Ascending aorta (tissue), 2 donors: ENCODE measurements at regions of chr19 and their contacts with region 1.

Region 1: DNA sequence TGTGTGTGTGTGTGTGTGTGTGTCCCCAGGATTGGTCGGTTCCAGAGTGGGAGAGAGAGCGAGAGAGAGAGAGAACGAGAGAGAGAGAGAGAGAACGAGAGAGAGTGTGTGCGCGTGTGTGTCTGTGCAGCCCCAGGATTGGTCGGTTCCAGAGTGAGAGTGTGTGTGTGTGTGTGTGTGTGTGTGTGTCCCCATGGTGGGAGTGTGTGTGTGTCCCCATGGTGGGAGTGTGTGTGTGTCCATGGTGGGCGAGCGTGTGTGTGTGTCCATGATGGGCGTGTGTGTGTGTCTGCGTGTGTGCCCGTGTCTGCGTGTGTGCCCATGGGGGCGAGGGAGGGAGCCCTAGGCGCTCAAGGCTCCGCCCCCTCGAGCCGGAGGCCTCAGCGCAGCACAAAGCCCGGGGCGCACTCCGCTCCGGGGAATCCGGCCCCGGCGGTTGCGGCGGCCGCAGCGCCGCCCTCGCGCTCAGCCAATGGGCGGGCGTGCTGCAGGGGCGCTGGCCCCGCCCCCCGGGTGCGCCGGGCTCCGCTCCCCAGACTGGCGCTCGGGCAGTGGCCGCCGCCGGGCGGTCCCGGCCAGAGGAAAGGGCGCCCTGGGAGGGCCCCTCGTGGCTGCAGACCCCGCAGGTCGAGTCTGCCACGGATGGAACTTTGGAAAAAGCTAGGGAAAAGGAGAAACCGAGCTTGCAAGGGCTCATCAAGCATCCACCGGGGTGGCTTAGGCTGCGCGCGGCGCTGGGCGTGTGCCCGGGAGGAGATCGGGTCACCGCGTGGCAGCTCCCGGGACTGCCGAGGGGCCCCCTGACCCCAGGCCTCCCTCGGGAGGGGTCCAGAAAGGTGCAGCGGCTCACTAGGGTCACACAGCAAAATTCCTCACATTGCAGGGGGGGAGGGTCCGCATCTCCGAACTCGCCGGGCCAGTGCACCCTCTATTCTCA is 96.2 kb downstream of the INSR start:
- DNase-seq: peak; percentile 77 to 96
- H3K4me3 ChIP-seq: peak overlapping the region; percentile 81 to 83
- H3K27ac ChIP-seq: peak overlapping the region; percentile 93 to 94
- H3K4me1 ChIP-seq: peaks cover 4 to 9% of the 10 kb centered on the region in 2 donors
- H3K27me3 ChIP-seq: no peaks in the 10 kb centered on the region
- CTCF ChIP-seq: peak; percentile 12 to 40 (median 32)

Region 2: DNA sequence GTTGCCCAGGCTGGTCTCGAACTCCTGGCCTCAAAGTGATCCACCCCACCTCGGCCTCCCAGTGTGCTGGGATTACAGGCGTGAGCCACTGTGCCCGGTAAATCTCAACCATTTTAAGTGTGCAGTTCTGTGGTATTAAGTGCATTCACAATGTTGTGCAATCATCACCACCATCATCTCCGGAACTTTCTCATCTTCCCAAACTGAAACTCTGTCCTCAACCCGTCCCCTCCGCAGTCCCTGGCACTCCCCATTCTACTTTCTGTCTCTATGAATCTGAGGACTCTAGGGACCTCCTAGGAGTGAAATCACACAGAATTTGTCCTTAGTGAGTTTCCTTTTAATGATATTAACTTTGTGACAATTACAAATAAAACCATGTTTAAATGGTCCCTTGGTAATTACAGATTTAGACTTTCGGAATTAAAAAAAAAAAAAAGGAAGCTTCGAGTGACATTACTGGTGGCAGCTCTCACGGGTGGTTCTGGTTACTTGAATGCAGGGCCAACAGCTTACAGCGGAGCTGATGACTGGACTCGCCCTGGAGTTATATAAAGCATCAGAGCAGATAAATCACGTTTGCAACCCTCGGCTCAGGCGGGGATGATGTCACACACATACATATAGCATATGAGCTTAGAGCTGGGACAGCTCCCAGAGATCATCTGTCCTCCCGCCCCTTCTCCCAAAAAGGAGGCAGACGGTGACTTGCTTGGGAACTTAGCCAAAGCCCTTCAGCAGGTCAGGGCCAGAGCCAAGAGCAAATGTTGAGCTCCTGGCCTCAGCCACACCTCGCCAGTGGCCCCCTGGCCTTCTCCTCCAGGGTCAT is 38.7 kb before region 1 on chr19:
- intact Hi-C with region 1: loop called (anchors 2 kb)
- DNase-seq: peak; percentile 89 to 94
- H3K4me3 ChIP-seq: no peak overlapping the region
- H3K27ac ChIP-seq: peak overlapping the region; percentile 87 to 89
- H3K4me1 ChIP-seq: peaks cover 0 to 10% of the 10 kb centered on the region in 2 donors
- H3K27me3 ChIP-seq: no peaks in the 10 kb centered on the region
- CTCF ChIP-seq: no peak

Region 3: DNA sequence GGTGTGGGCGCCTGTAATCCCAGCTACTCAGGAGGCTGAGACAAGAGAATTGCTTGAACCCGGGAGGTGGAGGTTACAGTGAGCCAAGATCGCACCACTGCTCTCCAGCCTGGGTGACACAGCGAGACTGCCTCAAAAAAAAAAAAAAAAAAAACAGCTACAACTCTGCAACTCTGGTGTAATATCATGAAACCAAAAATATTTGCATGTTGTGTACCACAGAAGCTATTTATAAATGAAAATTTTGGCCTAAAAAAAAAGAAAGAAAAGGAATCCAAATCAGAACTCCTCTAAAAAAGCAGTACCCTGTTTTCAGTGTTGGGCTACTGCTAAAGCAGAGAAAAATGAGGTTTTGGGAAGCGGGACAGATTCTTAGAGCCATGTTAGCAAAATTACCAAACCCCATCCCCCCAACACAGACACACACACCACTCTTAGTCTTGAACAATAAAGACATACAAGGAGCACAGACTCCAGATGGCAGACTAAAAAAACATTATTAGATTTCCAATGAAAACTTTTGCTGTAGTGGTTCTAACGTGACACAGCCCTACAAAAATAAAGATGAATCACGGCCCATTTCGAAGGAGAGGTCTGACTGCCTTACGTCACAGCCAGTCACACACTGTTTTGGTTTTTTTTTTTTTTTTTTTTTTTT is 44.7 kb after region 1 on chr19:
- intact Hi-C with region 1: loop called (anchors 2 kb)
- DNase-seq: peak in 1 of 2 donors; percentile 79
- H3K4me3 ChIP-seq: peak overlapping the region in 1 of 2 donors; percentile 6
- H3K27ac ChIP-seq: peak overlapping the region; percentile 80 to 92
- H3K4me1 ChIP-seq: peaks cover 0 to 35% of the 10 kb centered on the region in 2 donors
- H3K27me3 ChIP-seq: no peaks in the 10 kb centered on the region
- CTCF ChIP-seq: no peak